A549 (cell line): ENCODE measurements at regions of chr10 and their contacts with region 1.

Region 1: GRCh38 chr10:5434017-5434753 is 21.8 kb downstream of the NET1 start:
- DNase-seq: peak; percentile 40 to 73
- ATAC-seq: peak; percentile 94
- H3K4me3 ChIP-seq: no peak overlapping the region
- H3K27ac ChIP-seq: peak overlapping the region; percentile 75 to 78
- H3K4me1 ChIP-seq: peaks cover 26% of the 10 kb centered on the region
- CTCF ChIP-seq: peak; percentile 96
- EP300 ChIP-seq: no peak
- POLR2A ChIP-seq: no peak
- RAD21 ChIP-seq: peak; percentile 88 to 93

Region 2: DNA sequence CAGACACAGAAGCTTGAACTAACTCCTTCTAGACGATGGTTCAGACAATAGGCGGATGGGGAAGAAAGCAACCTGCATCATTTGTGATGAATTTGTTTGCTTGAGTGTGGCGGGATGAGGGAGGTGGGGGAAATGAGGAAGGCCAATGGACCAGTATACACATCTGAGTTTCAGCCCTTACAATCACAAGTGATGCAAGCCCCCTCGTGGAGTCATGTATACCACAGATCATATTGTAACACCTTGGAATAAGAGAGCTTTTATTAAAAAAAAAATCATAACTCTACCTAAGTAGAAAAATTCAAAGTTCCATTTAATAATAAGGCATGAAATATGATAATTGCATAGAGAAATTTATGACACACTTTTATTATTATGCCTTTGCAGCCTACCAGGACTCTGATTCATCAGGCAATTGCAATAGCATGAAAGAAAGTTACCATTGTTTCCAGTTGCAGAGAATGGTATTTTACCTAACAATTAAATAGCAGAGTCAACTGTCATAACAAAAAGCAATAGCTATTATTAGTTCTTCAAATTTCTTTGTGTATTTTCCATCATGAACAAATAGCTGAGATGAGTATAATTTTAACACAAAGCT is 838.4 kb before region 1 on chr10:
- CTCF ChIA-PET with region 1: no interaction called
- POLR2A ChIA-PET with region 1: no interaction called
- DNase-seq: no peak
- ATAC-seq: no peak
- H3K4me3 ChIP-seq: no peak overlapping the region
- H3K27ac ChIP-seq: no peak overlapping the region
- H3K4me1 ChIP-seq: no peaks in the 10 kb centered on the region
- CTCF ChIP-seq: no peak
- EP300 ChIP-seq: no peak
- POLR2A ChIP-seq: no peak
- RAD21 ChIP-seq: no peak

Region 3: DNA sequence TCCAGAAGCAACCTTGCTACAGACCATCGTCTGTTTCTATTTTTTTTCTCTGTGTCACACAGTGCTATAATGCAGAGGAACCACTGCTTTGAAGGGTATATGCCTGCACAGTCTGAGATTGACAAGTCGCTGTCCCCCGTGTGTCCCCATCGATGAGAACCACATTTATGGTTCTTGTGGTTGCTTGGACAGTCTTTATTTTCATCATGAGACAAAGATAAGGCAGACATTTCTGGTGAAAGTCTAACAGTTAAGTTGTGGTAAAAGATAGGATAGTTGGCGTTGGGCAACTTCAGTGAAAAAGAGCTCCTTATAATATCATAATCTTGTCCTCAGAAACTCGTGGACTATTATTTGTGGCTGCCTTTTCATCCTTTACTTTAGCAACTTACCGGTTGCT is 614.5 kb before region 1 on chr10:
- CTCF ChIA-PET with region 1: interaction called, 67 read pairs
- POLR2A ChIA-PET with region 1: no interaction called
- DNase-seq: no peak
- ATAC-seq: no peak
- H3K4me3 ChIP-seq: no peak overlapping the region
- H3K27ac ChIP-seq: no peak overlapping the region
- H3K4me1 ChIP-seq: peaks cover 7% of the 10 kb centered on the region; the same call in 2 of the 3 replicates
- CTCF ChIP-seq: no peak
- EP300 ChIP-seq: no peak
- POLR2A ChIP-seq: no peak
- RAD21 ChIP-seq: no peak

Region 4: DNA sequence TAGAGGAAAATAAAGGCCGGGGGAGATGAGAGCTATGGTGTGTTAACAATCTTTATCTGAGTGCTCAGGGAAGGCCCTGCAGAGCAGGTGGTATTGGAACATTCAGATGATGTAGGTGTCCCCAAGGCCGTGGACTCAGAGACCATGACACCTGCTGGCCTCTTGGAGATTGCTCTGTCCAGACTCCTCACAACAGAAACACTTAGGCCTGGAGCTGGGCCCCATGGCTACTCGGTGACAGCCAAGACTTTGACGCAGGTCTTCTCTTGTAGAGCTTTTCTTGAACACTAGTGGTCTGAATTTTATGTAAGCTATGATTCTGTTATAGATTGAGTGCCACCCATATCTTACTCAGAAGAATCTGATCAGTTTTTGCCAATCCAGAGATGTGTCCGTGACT is 594.8 kb before region 1 on chr10:
- CTCF ChIA-PET with region 1: interaction called, 11 read pairs
- POLR2A ChIA-PET with region 1: no interaction called
- DNase-seq: peak in 1 of 2 experiments; percentile 30
- ATAC-seq: peak; percentile 71 to 72; a peak in 4 of 6 replicates
- H3K4me3 ChIP-seq: no peak overlapping the region
- H3K27ac ChIP-seq: no peak overlapping the region
- H3K4me1 ChIP-seq: no peaks in the 10 kb centered on the region
- CTCF ChIP-seq: no peak
- EP300 ChIP-seq: no peak
- POLR2A ChIP-seq: no peak
- RAD21 ChIP-seq: no peak

Region 5: DNA sequence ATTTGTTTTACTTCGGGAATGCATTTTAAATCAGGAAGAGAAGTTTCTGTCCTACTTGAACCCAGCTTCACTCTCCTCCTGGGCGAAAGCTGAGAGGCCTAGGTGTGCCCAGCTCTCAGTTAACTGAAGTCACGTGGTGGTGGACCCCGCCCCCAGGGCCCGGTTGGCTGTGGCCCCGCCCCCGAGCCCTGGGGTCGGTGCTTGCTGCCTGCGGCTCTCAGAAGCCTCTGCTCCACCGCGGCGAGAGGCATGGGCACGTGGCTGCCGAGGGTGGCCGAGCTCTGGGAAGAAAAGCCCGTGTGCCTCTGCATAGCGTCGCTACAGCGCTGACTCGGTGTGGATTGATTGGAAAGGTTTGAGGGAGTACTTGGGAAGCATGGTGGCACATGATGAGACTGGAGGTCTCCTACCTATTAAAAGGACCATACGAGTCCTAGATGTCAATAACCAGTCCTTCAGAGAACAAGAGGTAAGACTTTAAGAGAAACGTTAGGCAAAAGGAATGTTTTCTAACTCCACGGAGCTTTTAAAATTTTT is 12.3 kb after region 1 on chr10:
- CTCF ChIA-PET with region 1: interaction called, 21 read pairs
- POLR2A ChIA-PET with region 1: no interaction called
- DNase-seq: peak; percentile 76 to 89
- ATAC-seq: peak; percentile 95 to 96
- H3K4me3 ChIP-seq: peak overlapping the region; percentile 61
- H3K27ac ChIP-seq: peak overlapping the region; percentile 73 to 84
- H3K4me1 ChIP-seq: peaks cover 35% of the 10 kb centered on the region
- CTCF ChIP-seq: no peak
- EP300 ChIP-seq: no peak
- POLR2A ChIP-seq: peak; percentile 99
- RAD21 ChIP-seq: peak; percentile 31 to 40; a peak in 2 of 5 replicates

Region 6: DNA sequence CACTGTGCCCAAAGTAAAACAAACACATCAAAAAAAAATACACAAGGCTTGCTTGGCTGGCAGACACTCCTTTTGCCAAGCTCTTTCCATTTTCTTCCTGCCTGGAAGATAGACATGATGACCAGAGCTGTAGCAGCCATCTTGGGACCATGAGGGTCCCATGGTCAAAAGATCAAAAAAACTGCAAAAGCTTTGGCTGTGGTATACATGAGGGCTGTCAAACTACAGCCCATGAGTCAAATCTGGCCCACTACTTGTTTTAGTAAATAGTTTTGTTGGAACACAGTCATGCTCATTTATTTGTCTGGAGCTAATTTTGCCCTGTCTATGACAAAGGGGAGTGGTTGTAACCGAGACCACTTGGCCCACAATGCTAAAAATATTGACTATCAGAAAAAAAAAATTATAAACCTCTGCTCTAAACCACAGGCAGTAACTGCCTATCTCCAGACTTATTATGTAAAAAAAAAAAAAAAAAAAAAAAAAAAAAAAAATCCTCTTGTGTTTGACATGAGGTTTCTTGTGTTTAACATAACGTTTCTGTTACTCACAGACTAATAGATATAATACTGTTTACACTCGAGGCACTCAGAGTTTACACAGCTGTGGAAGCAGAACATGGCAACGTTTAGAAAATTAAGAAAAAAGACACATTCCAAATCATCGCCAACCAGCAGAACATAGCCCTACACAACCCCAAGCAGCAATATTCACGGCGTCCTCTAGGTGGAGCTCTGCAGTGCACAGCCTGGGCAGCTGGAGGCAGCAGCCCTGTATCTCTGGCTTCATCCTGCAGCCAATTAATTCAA is 195.3 kb after region 1 on chr10:
- CTCF ChIA-PET with region 1: interaction called, 432 read pairs
- POLR2A ChIA-PET with region 1: no interaction called
- DNase-seq: peak; percentile 67 to 74
- ATAC-seq: peak; percentile 55 to 90; a peak in 3 of 6 replicates
- H3K4me3 ChIP-seq: no peak overlapping the region
- H3K27ac ChIP-seq: no peak overlapping the region; a peak in 1 of 6 replicates
- H3K4me1 ChIP-seq: peaks cover 27% of the 10 kb centered on the region
- CTCF ChIP-seq: peak; percentile 86
- EP300 ChIP-seq: no peak
- POLR2A ChIP-seq: no peak
- RAD21 ChIP-seq: peak; percentile 46 to 66; a peak in 4 of 5 replicates